ENCODE measurements at regions of chr2 and their contacts with region 1.

Region 1: GRCh38 chr2:156332534-156333273 is at the start of gene NR4A2:
- DNase-seq: peak; percentile 92
- H3K4me3 Mint-ChIP-seq: peak within 1 kb of the TSS; percentile 94
- H3K27ac Mint-ChIP-seq: peak within 1 kb of the TSS; percentile 97
- H3K4me1 Mint-ChIP-seq: peaks cover 45% of the 10 kb centered on the region
- H3K27me3 Mint-ChIP-seq: peaks cover 2% of the 10 kb centered on the region
- total RNA-seq, gene NR4A2: 9.3 to 10.0 TPM

Region 2: DNA sequence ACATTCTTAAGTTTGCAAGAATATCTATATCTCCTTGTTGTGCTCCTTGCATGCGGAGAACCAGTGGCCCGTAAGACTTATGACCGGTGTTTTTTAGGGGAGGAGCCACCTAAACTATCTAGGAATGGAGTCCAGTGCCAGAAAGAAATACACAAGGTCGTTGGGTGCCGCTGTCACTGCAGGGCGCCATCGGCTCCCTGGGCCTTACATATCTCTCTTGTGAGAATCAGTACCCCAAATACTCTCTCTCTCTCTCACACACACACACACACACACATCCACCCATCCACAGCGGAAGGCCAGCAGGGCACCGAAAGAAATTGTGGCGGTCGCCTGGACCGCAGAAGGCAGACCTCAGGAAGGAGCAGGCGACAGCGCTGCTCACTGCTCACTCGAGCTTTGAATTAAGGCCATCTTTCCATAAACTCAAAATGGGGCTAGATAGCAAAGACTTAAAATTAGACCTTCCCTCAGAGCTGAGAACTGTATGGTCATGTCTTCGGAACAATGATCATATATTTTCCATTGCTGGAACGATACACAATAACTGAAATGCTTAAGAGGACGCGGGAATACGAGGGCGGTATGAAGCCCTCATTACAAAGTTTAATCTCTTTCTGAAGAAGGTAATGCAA is 10.5 kb before region 1 on chr2:
- CTCF ChIA-PET with region 1: interaction called, 5 read pairs
- POLR2A ChIA-PET with region 1: interaction called, 4 read pairs
- intact Hi-C with region 1: loop called (anchors 1 kb)
- DNase-seq: peak; percentile 42
- H3K4me3 Mint-ChIP-seq: peak overlapping the region; percentile 65
- H3K27ac Mint-ChIP-seq: no peak overlapping the region
- H3K4me1 Mint-ChIP-seq: peaks cover 32% of the 10 kb centered on the region
- H3K27me3 Mint-ChIP-seq: peaks cover 52% of the 10 kb centered on the region

Region 3: DNA sequence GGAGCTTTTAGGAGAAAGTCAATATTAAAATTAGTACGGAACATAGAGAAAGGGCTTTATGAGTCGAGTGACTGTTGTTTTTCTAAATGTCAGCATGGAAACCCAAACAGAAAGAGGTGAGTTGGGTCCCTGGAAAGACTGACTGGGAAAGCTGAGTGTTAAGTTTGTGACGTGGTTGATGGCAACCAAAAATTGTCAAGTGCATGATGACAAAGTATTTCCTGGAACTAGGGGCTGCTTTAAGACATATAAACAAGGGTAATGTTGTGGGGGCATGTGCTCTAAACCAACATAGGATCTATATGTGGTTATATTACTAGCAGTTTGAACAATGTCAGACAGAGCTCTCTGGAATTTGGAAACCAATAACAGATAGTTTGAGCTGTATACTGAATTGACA is 52.5 kb after region 1 on chr2:
- CTCF ChIA-PET with region 1: interaction called, 15 read pairs
- POLR2A ChIA-PET with region 1: interaction called, 8 read pairs
- intact Hi-C with region 1: no loop called
- DNase-seq: peak; percentile 37
- H3K4me3 Mint-ChIP-seq: no peak overlapping the region
- H3K27ac Mint-ChIP-seq: peak overlapping the region; percentile 46
- H3K4me1 Mint-ChIP-seq: peaks cover 21% of the 10 kb centered on the region
- H3K27me3 Mint-ChIP-seq: peaks cover 6% of the 10 kb centered on the region

Region 4: GRCh38 chr2:156435715-156436496 is 103.2 kb after region 1 on chr2 and contains the start of gene GPD2:
- CTCF ChIA-PET with region 1: interaction called, 15 read pairs
- POLR2A ChIA-PET with region 1: interaction called, 7 read pairs
- intact Hi-C with region 1: no loop called
- DNase-seq: peak; percentile 67
- H3K4me3 Mint-ChIP-seq: peak within 1 kb of the TSS; percentile 89
- H3K27ac Mint-ChIP-seq: peak within 1 kb of the TSS; percentile 82
- H3K4me1 Mint-ChIP-seq: peaks cover 28% of the 10 kb centered on the region
- H3K27me3 Mint-ChIP-seq: no peaks in the 10 kb centered on the region
- total RNA-seq, gene GPD2: 27.3 to 28.6 TPM

Region 5: GRCh38 chr2:156892467-156893281 is 560.0 kb after region 1 on chr2:
- CTCF ChIA-PET with region 1: no interaction called
- POLR2A ChIA-PET with region 1: no interaction called
- intact Hi-C with region 1: loop called (anchors 5 kb)
- DNase-seq: no peak
- H3K4me3 Mint-ChIP-seq: no peak overlapping the region
- H3K27ac Mint-ChIP-seq: no peak overlapping the region
- H3K4me1 Mint-ChIP-seq: peaks cover 6% of the 10 kb centered on the region
- H3K27me3 Mint-ChIP-seq: peaks cover 16% of the 10 kb centered on the region

Region 6: GRCh38 chr2:157443795-157444640 is 1111.3 kb after region 1 on chr2 and contains the start of gene CYTIP:
- CTCF ChIA-PET with region 1: no interaction called
- POLR2A ChIA-PET with region 1: no interaction called
- intact Hi-C with region 1: loop called (anchors 2 kb)
- DNase-seq: peak; percentile 82
- H3K4me3 Mint-ChIP-seq: peak within 1 kb of the TSS; percentile 92
- H3K27ac Mint-ChIP-seq: peak within 1 kb of the TSS; percentile 99
- H3K4me1 Mint-ChIP-seq: peaks cover 37% of the 10 kb centered on the region
- H3K27me3 Mint-ChIP-seq: peaks cover 2% of the 10 kb centered on the region
- total RNA-seq, gene CYTIP: 369 to 388 TPM

Measured in activated CD4-positive, alpha-beta memory T cell treated with anti-CD3 and anti-CD28 coated beads for 36 hours (primary cell).